Endothelial cell of umbilical vein (primary cell): ENCODE measurements at regions of chr5 and their contacts with region 1.

Region 1: GRCh38 chr5:84382363-84383295 is 2.1 kb downstream of the EDIL3 start:
- DNase-seq: peak; percentile 66
- H3K4me3 ChIP-seq: peak overlapping the region; percentile 22 to 65 (median 51)
- H3K27ac ChIP-seq: peak overlapping the region; percentile 22
- H3K4me1 ChIP-seq: peaks cover 19% of the 10 kb centered on the region
- H3K27me3 ChIP-seq: no peaks in the 10 kb centered on the region
- CTCF ChIP-seq: no peak
- POLR2A ChIP-seq: peak; percentile 54

Region 2: DNA sequence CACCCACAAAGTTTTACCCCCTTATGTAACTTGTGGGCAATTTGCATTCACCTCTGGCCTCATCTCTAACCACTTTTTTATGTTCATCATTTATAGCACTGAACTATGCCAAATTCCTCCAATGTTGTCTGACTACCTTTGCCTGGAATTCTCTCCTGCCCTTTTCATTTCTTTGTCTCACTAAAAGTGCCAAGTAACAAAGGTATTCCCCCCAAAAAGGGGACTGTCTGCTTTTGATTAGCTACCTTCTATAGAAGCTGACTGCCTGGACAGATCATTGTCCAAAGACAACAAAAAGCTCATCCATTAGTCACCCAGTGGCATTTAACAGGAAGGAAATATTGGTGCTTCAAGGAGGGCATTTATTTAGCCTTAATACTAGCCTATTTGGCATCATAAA is 1101.0 kb before region 1 on chr5:
- CTCF ChIA-PET with region 1: no interaction called
- POLR2A ChIA-PET with region 1: no interaction called
- dilution Hi-C with region 1: no loop called
- intact Hi-C with region 1: no loop called
- DNase-seq: peak; percentile 12
- H3K4me3 ChIP-seq: no peak overlapping the region
- H3K27ac ChIP-seq: no peak overlapping the region
- H3K4me1 ChIP-seq: peaks cover 6% of the 10 kb centered on the region
- H3K27me3 ChIP-seq: no peaks in the 10 kb centered on the region
- CTCF ChIP-seq: no peak
- POLR2A ChIP-seq: no peak

Region 3: GRCh38 chr5:83777856-83778255 is 604.8 kb before region 1 on chr5:
- CTCF ChIA-PET with region 1: no interaction called
- POLR2A ChIA-PET with region 1: no interaction called
- dilution Hi-C with region 1: no loop called
- intact Hi-C with region 1: loop called (anchors 5 kb)
- DNase-seq: peak; percentile 20
- H3K4me3 ChIP-seq: no peak overlapping the region
- H3K27ac ChIP-seq: peak overlapping the region; percentile 16
- H3K4me1 ChIP-seq: peaks cover 27% of the 10 kb centered on the region
- H3K27me3 ChIP-seq: no peaks in the 10 kb centered on the region
- CTCF ChIP-seq: no peak
- POLR2A ChIP-seq: no peak

Region 4: DNA sequence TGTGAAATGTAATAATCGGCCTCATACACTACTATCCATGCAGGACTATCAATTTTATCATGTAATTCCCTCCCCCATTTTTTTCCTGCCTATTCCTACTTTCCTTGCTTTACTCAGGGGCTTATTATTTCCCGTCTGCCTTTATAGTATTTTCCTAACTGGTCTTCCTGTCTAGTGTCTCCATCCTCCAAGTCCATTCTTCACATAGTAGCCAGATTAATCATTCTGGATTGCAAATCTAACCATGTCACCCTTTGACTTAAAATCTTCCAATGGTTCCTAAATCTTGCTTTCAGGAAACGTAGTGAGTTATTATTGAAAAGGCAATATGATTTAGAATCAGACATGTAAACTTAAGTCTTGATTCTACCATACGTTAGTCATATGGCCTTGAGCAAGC is 354.5 kb before region 1 on chr5:
- CTCF ChIA-PET with region 1: interaction called, 4 read pairs
- POLR2A ChIA-PET with region 1: no interaction called
- dilution Hi-C with region 1: no loop called
- intact Hi-C with region 1: loop called (anchors 5 kb)
- DNase-seq: peak; percentile 88
- H3K4me3 ChIP-seq: peak overlapping the region in 1 of 3 experiments; percentile 5
- H3K27ac ChIP-seq: peak overlapping the region; percentile 87
- H3K4me1 ChIP-seq: peaks cover 28% of the 10 kb centered on the region
- H3K27me3 ChIP-seq: no peaks in the 10 kb centered on the region
- CTCF ChIP-seq: no peak
- POLR2A ChIP-seq: no peak

Region 5: GRCh38 chr5:84274585-84275468 is 107.8 kb before region 1 on chr5:
- CTCF ChIA-PET with region 1: interaction called, 21 read pairs
- POLR2A ChIA-PET with region 1: no interaction called
- dilution Hi-C with region 1: no loop called
- intact Hi-C with region 1: loop called (anchors 1 kb)
- DNase-seq: peak; percentile 61
- H3K4me3 ChIP-seq: no peak overlapping the region
- H3K27ac ChIP-seq: no peak overlapping the region
- H3K4me1 ChIP-seq: no peaks in the 10 kb centered on the region
- H3K27me3 ChIP-seq: no peaks in the 10 kb centered on the region
- CTCF ChIP-seq: peak; percentile 39 to 45
- POLR2A ChIP-seq: no peak

Region 6: GRCh38 chr5:84301535-84301934 is 81.1 kb before region 1 on chr5:
- CTCF ChIA-PET with region 1: interaction called, 5 read pairs
- POLR2A ChIA-PET with region 1: no interaction called
- dilution Hi-C with region 1: no loop called
- intact Hi-C with region 1: loop called (anchors 1 kb)
- DNase-seq: peak; percentile 69
- H3K4me3 ChIP-seq: no peak overlapping the region
- H3K27ac ChIP-seq: peak overlapping the region; percentile 48
- H3K4me1 ChIP-seq: peaks cover 35% of the 10 kb centered on the region
- H3K27me3 ChIP-seq: no peaks in the 10 kb centered on the region
- CTCF ChIP-seq: no peak
- POLR2A ChIP-seq: no peak

Region 7: DNA sequence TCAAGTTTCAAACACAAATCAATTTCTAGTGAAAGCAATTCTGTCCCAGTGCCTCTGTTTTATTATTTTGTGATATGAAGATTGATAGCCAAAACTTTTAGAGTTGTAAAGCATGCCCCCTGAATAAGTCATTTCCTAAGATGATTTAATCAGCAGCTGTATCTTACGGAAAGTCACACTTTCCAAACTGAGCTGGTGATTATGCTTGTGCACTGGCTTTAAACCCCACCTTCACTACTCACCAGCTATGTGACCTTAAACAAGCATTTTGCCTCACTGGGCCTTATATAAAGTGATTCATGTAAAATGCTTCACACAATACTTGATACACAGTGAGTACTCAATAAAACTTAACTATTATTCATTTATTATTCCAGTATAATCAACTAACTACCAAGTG is 76.0 kb before region 1 on chr5:
- CTCF ChIA-PET with region 1: interaction called, 5 read pairs
- POLR2A ChIA-PET with region 1: no interaction called
- dilution Hi-C with region 1: no loop called
- intact Hi-C with region 1: loop called (anchors 1 kb)
- DNase-seq: peak; percentile 84
- H3K4me3 ChIP-seq: no peak overlapping the region
- H3K27ac ChIP-seq: peak overlapping the region; percentile 22
- H3K4me1 ChIP-seq: peaks cover 46% of the 10 kb centered on the region
- H3K27me3 ChIP-seq: no peaks in the 10 kb centered on the region
- CTCF ChIP-seq: no peak
- POLR2A ChIP-seq: no peak

Region 8: GRCh38 chr5:84327591-84327990 is 55.0 kb before region 1 on chr5:
- CTCF ChIA-PET with region 1: no interaction called
- POLR2A ChIA-PET with region 1: no interaction called
- dilution Hi-C with region 1: no loop called
- intact Hi-C with region 1: no loop called
- DNase-seq: no peak
- H3K4me3 ChIP-seq: no peak overlapping the region
- H3K27ac ChIP-seq: no peak overlapping the region
- H3K4me1 ChIP-seq: no peaks in the 10 kb centered on the region
- H3K27me3 ChIP-seq: no peaks in the 10 kb centered on the region
- CTCF ChIP-seq: no peak
- POLR2A ChIP-seq: no peak

Region 9: GRCh38 chr5:84393969-84394368 is 11.3 kb after region 1 on chr5:
- CTCF ChIA-PET with region 1: interaction called, 5 read pairs
- POLR2A ChIA-PET with region 1: interaction called, 3 read pairs
- dilution Hi-C with region 1: no loop called
- intact Hi-C with region 1: loop called (anchors 1 kb)
- DNase-seq: peak; percentile 90
- H3K4me3 ChIP-seq: no peak overlapping the region
- H3K27ac ChIP-seq: peak overlapping the region; percentile 68
- H3K4me1 ChIP-seq: peaks cover 18% of the 10 kb centered on the region
- H3K27me3 ChIP-seq: no peaks in the 10 kb centered on the region
- CTCF ChIP-seq: no peak
- POLR2A ChIP-seq: no peak

Region 10: GRCh38 chr5:84406111-84406510 is 23.5 kb after region 1 on chr5:
- CTCF ChIA-PET with region 1: no interaction called
- POLR2A ChIA-PET with region 1: no interaction called
- dilution Hi-C with region 1: no loop called
- intact Hi-C with region 1: no loop called
- DNase-seq: no peak
- H3K4me3 ChIP-seq: no peak overlapping the region
- H3K27ac ChIP-seq: no peak overlapping the region
- H3K4me1 ChIP-seq: no peaks in the 10 kb centered on the region
- H3K27me3 ChIP-seq: no peaks in the 10 kb centered on the region
- CTCF ChIP-seq: no peak
- POLR2A ChIP-seq: no peak

Region 11: GRCh38 chr5:84535281-84535680 is 152.7 kb after region 1 on chr5:
- CTCF ChIA-PET with region 1: no interaction called
- POLR2A ChIA-PET with region 1: no interaction called
- dilution Hi-C with region 1: no loop called
- intact Hi-C with region 1: no loop called
- DNase-seq: no peak
- H3K4me3 ChIP-seq: no peak overlapping the region
- H3K27ac ChIP-seq: no peak overlapping the region
- H3K4me1 ChIP-seq: no peaks in the 10 kb centered on the region
- H3K27me3 ChIP-seq: no peaks in the 10 kb centered on the region
- CTCF ChIP-seq: no peak
- POLR2A ChIP-seq: no peak